ENCODE measurements at regions of chr11 and their contacts with region 1.

Region 1: GRCh38 chr11:102312667-102313066 is 4.6 kb upstream of the BIRC3 start:
- DNase-seq: peak; percentile 40
- ATAC-seq: no peak
- H3K4me3 ChIP-seq: peak overlapping the region; percentile 24; the same call in 1 of the 2 replicates
- H3K27ac ChIP-seq: no peak overlapping the region
- H3K4me1 ChIP-seq: peaks cover 5% of the 10 kb centered on the region
- H3K27me3 ChIP-seq: no peaks in the 10 kb centered on the region
- CTCF ChIP-seq: no peak
- POLR2A ChIP-seq: no peak
- RAD21 ChIP-seq: no peak

Region 2: DNA sequence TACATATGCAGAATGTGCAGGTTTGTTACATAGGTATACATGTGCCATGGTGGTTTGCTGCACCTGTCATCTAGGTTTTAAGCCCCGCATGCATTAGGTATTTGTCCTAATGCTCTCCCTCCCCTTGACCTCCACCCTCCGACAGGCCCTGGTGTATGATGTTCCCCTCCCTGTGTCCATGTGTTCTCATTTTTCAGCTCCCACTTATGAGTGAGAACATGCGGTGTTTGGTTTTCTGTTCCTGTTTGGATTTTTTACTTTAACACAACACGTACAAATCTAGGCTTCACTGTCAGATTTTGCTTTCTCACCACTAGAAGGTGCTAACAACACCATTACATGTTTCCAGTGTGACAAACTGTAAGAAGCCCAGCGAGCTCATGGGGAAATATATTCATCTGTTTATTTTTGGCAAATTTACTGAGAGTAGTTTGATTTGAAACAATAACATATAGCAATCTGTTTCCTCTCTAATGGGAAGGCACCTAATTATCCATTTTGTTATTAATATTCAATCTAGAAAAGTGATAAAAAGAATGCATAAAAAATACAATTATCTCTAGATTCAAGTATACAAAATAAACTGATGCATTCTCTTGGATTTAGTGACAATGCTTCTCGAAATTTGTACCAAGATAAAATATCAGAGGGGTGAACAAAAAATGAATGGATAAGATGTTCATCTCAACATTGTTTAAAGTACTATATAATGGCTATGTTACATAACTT is 18.6 kb before region 1 on chr11:
- CTCF ChIA-PET with region 1: interaction called, 11 read pairs
- POLR2A ChIA-PET with region 1: interaction called, 5 read pairs
- dilution Hi-C with region 1: no loop called
- in situ Hi-C with region 1: no loop called
- intact Hi-C with region 1: no loop called
- DNase-seq: peak; percentile 66
- ATAC-seq: peak; percentile 77
- H3K4me3 ChIP-seq: no peak overlapping the region
- H3K27ac ChIP-seq: no peak overlapping the region
- H3K4me1 ChIP-seq: peaks cover 5% of the 10 kb centered on the region
- H3K27me3 ChIP-seq: no peaks in the 10 kb centered on the region
- CTCF ChIP-seq: peak; percentile 61
- POLR2A ChIP-seq: no peak
- RAD21 ChIP-seq: peak; percentile 44